IMR-90 (cell line): ENCODE measurements at regions of chr10 and their contacts with region 1.

Region 1: GRCh38 chr10:28734941-28735759 is 57.8 kb downstream of the BAMBI start:
- DNase-seq: peak; percentile 96
- ATAC-seq: peak; percentile 96
- H3K4me3 ChIP-seq: no peak overlapping the region
- H3K27ac ChIP-seq: peak overlapping the region; percentile 40
- H3K4me1 ChIP-seq: peaks cover 5% of the 10 kb centered on the region
- H3K27me3 ChIP-seq: peaks cover 16% of the 10 kb centered on the region
- CTCF ChIP-seq: no peak
- POLR2A ChIP-seq: no peak
- RAD21 ChIP-seq: no peak

Region 2: GRCh38 chr10:28812384-28813372 is 77.5 kb after region 1 on chr10:
- CTCF ChIA-PET with region 1: no interaction called
- POLR2A ChIA-PET with region 1: no interaction called
- dilution Hi-C with region 1: no loop called
- in situ Hi-C with region 1: no loop called
- intact Hi-C with region 1: no loop called
- DNase-seq: no peak
- ATAC-seq: no peak
- H3K4me3 ChIP-seq: no peak overlapping the region
- H3K27ac ChIP-seq: no peak overlapping the region
- H3K4me1 ChIP-seq: peaks cover 14% of the 10 kb centered on the region
- H3K27me3 ChIP-seq: no peaks in the 10 kb centered on the region
- CTCF ChIP-seq: no peak
- POLR2A ChIP-seq: no peak
- RAD21 ChIP-seq: no peak

Region 3: DNA sequence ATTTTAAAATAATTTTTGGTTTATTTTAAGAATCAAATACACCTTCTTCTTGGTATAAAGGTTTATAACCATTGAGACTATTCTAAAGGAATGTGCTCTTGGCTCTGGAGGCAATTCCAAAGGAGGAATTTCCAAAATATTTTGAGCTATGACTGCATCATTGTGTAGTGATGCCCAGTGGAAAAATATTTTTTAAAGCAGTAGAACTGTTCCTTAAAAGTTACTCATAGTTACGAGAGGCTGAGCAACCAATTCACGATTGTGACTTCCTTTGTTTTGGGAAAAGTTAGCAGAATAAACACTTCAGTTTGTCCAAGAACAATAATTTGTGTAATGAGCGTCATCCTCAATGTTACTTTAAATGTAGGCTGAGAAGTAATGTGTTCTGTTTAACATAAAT is 175.8 kb after region 1 on chr10:
- CTCF ChIA-PET with region 1: no interaction called
- POLR2A ChIA-PET with region 1: no interaction called
- dilution Hi-C with region 1: no loop called
- in situ Hi-C with region 1: no loop called
- intact Hi-C with region 1: loop called (anchors 10 kb)
- DNase-seq: peak; percentile 85
- ATAC-seq: peak; percentile 71
- H3K4me3 ChIP-seq: no peak overlapping the region
- H3K27ac ChIP-seq: no peak overlapping the region
- H3K4me1 ChIP-seq: peaks cover 10% of the 10 kb centered on the region
- H3K27me3 ChIP-seq: no peaks in the 10 kb centered on the region
- CTCF ChIP-seq: no peak
- POLR2A ChIP-seq: no peak
- RAD21 ChIP-seq: no peak

Region 4: GRCh38 chr10:29204070-29204800 is 469.1 kb after region 1 on chr10:
- CTCF ChIA-PET with region 1: no interaction called
- POLR2A ChIA-PET with region 1: no interaction called
- dilution Hi-C with region 1: no loop called
- in situ Hi-C with region 1: no loop called
- intact Hi-C with region 1: no loop called
- DNase-seq: no peak
- ATAC-seq: no peak
- H3K4me3 ChIP-seq: no peak overlapping the region
- H3K27ac ChIP-seq: no peak overlapping the region
- H3K4me1 ChIP-seq: peaks cover 8% of the 10 kb centered on the region; the same call in 1 of the 2 replicates
- H3K27me3 ChIP-seq: peaks cover 14% of the 10 kb centered on the region
- CTCF ChIP-seq: no peak
- POLR2A ChIP-seq: no peak
- RAD21 ChIP-seq: no peak